Left ventricle myocardium inferior (tissue), 1 donor: ENCODE measurements at regions of chr1 and their contacts with region 1.

Region 1: DNA sequence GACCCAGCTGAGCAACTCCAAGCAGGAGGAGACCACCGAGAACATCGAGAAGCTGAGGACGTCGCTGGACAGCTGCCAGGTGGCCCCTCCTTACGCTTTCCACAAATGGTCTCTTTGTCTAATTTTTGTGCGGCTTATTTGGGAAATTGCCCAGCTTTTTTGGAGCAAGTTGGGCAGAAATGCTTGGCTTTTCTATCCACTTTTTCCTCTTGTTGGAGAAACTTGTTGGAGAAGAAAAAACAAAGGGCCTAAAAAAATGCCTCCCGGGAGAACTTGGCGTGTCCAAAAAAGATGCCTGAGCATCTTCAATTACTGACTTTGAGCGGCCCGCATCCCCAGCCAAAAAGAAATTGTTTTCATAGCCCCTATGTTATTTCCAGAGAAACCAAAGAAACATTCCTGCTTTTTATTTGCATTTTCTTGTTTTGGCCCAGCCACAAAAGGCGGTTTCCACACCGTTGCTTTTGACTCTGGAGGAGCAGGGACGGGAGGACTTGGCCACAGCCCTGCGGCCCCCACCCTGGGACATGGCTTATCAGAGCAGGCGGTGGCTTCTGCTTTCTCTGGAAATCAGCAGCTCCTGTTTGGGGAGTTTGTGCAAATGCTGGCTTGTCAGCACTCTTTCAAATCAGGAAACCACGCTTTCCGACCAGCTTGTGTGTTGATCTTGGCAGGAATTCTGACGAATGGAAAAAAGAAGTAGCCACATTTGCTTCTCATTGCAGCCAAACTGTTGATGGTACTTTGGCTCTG is 81.2 kb upstream of the EFHD2 start:
- DNase-seq: peak; percentile 79
- H3K4me3 ChIP-seq: peak overlapping the region; percentile 38
- H3K27ac ChIP-seq: peak overlapping the region; percentile 80
- H3K4me1 ChIP-seq: peaks cover 25% of the 10 kb centered on the region
- H3K27me3 ChIP-seq: peaks cover 8% of the 10 kb centered on the region
- CTCF ChIP-seq: no peak

Region 2: DNA sequence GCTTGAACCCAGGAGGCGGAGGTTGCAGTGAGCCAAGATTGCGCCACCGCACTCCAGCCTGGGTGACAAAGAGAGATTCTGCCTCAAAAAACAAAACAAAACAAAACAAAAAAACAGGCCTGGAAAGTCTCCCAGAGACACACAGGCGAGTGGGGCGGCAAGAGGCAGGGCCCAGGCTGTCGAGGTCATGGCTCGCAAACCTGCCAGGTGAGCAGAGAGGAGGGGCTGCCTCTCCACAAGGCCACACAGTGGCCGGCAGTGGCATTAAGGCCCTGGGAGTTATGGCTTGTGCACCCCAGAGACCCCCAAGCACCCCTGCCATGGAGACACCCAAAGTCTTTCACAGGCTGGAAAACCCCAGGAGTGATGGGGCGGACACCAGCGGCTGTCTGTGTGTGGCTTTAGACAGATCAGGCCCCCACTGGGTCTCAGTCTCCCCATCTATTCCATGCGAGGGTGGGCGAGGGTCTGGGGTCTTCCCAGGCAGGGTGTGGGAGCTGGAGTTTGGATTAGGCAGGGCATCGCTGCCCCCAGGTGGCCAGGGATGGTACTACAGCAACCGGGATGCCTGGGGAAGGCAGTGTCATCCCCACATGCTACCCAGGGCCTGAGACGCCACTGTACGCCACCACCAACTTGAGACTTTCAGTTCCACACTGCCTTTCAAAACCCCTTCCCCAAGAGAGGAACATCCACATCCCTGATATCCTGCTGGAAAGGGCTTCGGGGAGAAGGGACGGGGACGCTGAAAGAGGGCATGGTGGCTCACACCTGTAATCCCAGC is 102.5 kb after region 1 on chr1:
- intact Hi-C with region 1: loop called (anchors 5 kb)
- DNase-seq: peak; percentile 73
- H3K4me3 ChIP-seq: no peak overlapping the region
- H3K27ac ChIP-seq: no peak overlapping the region
- H3K4me1 ChIP-seq: peaks cover 25% of the 10 kb centered on the region
- H3K27me3 ChIP-seq: no peaks in the 10 kb centered on the region
- CTCF ChIP-seq: peak; percentile 95